GM23248 (cell line): ENCODE measurements at regions of chr2 and their contacts with region 1.

Region 1: DNA sequence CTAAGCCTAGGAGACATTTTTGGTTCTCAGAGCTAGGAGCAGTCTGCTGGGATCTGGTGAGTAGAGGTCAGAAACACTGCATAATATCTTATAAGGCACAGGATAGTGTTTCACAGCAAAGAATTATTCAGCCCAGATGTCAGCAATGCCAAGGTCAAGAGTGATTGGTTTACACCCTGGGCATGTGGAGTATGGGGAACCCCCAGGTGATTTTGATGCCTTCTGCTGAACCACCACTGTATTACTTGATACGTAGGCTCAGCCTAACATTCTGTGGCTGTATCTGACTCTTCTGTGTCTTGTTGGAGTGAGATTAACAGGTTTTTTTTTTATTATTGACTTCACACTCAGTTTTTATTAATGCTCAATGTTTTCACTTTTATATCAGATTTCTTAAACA is 6.0 kb downstream of the DDX18 start:
- DNase-seq: no peak
- H3K4me3 ChIP-seq: no peak overlapping the region
- H3K27ac ChIP-seq: no peak overlapping the region
- H3K4me1 ChIP-seq: peaks cover 16% of the 10 kb centered on the region
- H3K27me3 ChIP-seq: no peaks in the 10 kb centered on the region

Region 2: GRCh38 chr2:117406443-117406842 is 414.0 kb before region 1 on chr2:
- in situ Hi-C with region 1: no loop called
- DNase-seq: no peak
- H3K4me3 ChIP-seq: no peak overlapping the region
- H3K27ac ChIP-seq: no peak overlapping the region
- H3K4me1 ChIP-seq: no peaks in the 10 kb centered on the region
- H3K27me3 ChIP-seq: no peaks in the 10 kb centered on the region

Region 3: DNA sequence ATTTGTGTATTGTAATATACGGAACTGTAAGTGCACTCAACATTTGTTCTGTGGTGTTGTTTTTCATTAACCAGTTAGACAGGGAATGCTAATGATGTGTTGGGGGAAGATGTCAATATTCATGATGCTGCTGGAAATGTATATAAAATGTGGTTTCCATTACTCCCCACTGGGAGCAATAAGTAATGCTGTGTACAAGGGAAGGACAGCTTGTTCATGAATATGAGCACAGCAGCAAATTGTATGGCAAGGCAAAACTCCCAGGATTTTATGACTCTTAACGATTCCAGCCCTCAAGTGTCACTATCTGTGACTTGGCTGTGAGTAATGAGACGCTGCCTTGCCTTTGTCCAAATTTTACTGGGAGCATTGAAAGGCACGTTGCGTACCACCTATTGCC is 318.3 kb before region 1 on chr2:
- in situ Hi-C with region 1: no loop called
- DNase-seq: no peak
- H3K4me3 ChIP-seq: no peak overlapping the region
- H3K27ac ChIP-seq: no peak overlapping the region
- H3K4me1 ChIP-seq: no peaks in the 10 kb centered on the region
- H3K27me3 ChIP-seq: no peaks in the 10 kb centered on the region

Region 4: DNA sequence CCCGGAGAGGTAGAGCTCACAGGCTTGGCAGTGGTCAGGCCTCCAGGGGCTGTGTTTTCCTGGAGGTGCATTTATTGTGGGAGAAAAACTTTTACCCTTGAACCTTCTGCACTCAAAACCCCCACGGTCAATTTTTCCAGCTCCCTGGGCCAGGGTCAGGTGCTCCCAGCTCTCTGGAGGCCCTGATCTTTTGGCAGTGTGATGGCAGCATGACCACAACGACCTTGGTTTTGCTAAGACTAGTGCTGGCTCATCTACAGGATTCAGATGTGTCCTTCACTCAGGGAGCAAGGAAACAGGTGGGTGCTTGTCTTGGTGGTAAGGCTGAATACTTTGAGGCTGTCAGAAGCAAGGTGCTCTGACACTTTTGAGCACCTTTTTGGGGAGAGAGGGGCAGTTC is 101.1 kb after region 1 on chr2:
- in situ Hi-C with region 1: loop called (anchors 10 kb)
- DNase-seq: no peak
- H3K4me3 ChIP-seq: no peak overlapping the region
- H3K27ac ChIP-seq: no peak overlapping the region
- H3K4me1 ChIP-seq: no peaks in the 10 kb centered on the region
- H3K27me3 ChIP-seq: no peaks in the 10 kb centered on the region